ENCODE measurements at regions of chr12 and their contacts with region 1.

Region 1: GRCh38 chr12:22088886-22089285 is 42.9 kb downstream of the CMAS start:
- DNase-seq: no peak
- H3K4me3 ChIP-seq: no peak overlapping the region
- CTCF ChIP-seq: no peak
- POLR2A ChIP-seq: no peak

Region 2: DNA sequence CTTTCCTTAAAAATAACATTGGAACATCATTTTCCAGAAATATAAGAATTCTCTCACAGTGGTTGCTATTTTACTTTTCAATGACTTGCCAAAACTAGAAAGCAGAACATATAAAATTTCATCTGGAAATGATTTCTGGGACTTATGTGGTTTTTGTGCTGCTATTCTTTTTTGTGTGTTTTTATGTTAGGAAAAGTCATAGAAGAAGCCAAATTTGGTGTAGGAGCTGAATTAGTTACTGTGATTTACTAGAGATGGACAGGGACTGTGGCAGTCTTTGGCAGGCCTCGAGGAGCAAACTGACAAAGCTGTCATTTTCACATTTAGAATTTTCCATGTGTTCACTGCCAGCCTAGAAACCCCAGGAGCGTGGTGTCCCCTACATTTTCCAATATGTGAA is 392.9 kb before region 1 on chr12:
- intact Hi-C with region 1: no loop called
- DNase-seq: no peak
- H3K4me3 ChIP-seq: no peak overlapping the region
- CTCF ChIP-seq: no peak
- POLR2A ChIP-seq: no peak

Region 3: DNA sequence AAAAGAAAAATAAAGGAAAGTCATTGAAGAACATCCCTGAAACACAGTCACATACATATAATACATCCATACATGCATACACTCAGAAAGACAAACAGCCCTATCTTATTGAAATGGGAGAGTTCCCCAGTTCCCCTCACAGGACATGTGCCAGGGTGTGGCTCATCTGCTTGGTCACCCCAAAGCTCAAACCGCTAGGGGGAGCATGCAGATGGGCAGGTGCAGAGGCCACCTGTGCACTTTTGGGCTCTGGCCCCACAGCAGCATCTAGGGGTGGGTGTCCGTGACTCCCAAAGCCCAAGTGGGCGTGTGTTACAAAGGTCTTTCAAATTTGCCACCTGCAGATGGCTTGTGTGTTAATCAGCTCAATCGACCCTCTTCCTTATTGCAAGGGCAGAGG is 32.3 kb after region 1 on chr12:
- intact Hi-C with region 1: no loop called
- DNase-seq: no peak
- H3K4me3 ChIP-seq: no peak overlapping the region
- CTCF ChIP-seq: no peak
- POLR2A ChIP-seq: no peak

Region 4: DNA sequence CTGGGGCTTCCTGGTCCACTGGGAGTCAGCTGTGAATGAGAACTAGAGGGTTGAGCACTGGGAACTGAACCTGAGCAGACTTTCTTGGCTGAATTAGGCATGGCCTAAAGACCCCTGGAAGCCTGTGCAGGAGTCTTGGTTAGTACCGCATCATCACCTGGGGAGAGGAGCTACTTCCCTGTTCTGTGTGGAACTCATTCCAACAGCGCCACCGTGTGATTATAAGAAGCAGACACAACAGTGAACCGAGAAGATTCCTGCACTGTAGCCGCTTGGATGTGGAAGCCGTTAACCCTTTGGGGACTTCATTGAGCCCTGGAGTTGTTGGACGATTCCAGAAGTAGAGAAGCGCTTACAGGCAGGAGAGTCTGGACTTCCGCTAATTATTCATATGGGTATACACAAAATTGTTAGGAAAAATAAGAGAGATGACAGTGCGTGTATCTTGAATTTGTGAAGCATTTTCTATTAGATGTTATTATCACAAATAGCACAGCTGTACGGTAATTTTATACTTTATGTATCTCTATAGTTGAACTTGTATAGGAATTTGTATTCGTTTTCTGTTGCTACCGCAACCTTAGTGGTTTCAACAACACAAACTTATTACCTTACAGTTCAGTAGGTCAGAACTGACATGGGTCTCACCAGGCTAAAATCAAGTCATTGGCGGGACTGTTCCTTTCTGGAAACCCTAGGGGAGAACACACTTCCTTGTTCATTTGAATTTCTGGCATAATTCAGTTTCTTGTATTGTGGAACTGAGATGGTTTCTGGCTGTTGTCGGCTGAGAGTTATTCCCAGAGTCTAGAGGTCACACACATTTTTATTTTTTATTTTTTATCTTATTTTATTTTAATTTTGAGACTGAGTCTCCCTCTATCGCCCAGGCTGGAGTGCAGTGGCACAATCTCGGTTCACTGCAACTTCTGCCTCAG is 354.8 kb after region 1 on chr12:
- intact Hi-C with region 1: loop called (anchors 5 kb)
- DNase-seq: peak; percentile 59 to 86
- H3K4me3 ChIP-seq: no peak overlapping the region
- CTCF ChIP-seq: no peak
- POLR2A ChIP-seq: no peak